ENCODE measurements at regions of chrX and their contacts with region 1.

Region 1: GRCh38 chrX:8254386-8254785 is 83.3 kb upstream of the VCX2 start:
- DNase-seq: no peak
- H3K4me3 ChIP-seq: no peak overlapping the region
- H3K27ac ChIP-seq: no peak overlapping the region
- H3K4me1 ChIP-seq: no peaks in the 10 kb centered on the region
- H3K27me3 ChIP-seq: no peaks in the 10 kb centered on the region
- CTCF ChIP-seq: no peak

Region 2: GRCh38 chrX:8025705-8026104 is 228.7 kb before region 1 on chrX:
- CTCF ChIA-PET with region 1: no interaction called
- POLR2A ChIA-PET with region 1: no interaction called
- intact Hi-C with region 1: no loop called
- DNase-seq: no peak
- H3K4me3 ChIP-seq: no peak overlapping the region
- H3K27ac ChIP-seq: no peak overlapping the region
- H3K4me1 ChIP-seq: no peaks in the 10 kb centered on the region
- H3K27me3 ChIP-seq: no peaks in the 10 kb centered on the region
- CTCF ChIP-seq: no peak

Region 3: DNA sequence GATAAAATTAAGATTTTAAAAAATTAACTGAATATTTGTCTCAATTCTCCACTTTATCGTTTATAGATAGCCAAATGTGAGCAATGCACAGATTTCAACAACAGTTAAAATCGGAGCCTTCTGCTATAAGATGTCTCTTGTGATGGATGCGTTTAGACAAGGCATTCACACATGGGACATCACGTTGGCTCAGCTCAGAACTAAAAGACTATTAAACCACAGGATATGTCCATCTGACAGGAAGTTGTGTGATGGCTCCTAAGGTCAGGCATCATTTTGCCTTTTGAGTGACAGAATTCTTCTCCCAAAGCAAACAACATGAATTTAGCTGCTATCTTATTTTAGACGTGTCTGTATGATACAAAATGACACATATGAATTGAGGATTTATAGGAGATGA is 193.0 kb after region 1 on chrX:
- CTCF ChIA-PET with region 1: no interaction called
- POLR2A ChIA-PET with region 1: interaction called, 36 read pairs
- intact Hi-C with region 1: no loop called
- DNase-seq: no peak
- H3K4me3 ChIP-seq: no peak overlapping the region
- H3K27ac ChIP-seq: no peak overlapping the region
- H3K4me1 ChIP-seq: no peaks in the 10 kb centered on the region
- H3K27me3 ChIP-seq: no peaks in the 10 kb centered on the region
- CTCF ChIP-seq: no peak